ENCODE measurements at regions of chr16 and their contacts with region 1.

Region 1: GRCh38 chr16:56600398-56600999 is 7.9 kb upstream of the MT2A start:
- DNase-seq: no peak
- ATAC-seq: peak; percentile 50
- H3K4me3 Mint-ChIP-seq: no peak overlapping the region
- H3K27ac Mint-ChIP-seq: no peak overlapping the region
- H3K4me1 Mint-ChIP-seq: no peaks in the 10 kb centered on the region
- H3K27me3 Mint-ChIP-seq: peaks cover 26% of the 10 kb centered on the region
- CTCF ChIP-seq: no peak

Region 2: DNA sequence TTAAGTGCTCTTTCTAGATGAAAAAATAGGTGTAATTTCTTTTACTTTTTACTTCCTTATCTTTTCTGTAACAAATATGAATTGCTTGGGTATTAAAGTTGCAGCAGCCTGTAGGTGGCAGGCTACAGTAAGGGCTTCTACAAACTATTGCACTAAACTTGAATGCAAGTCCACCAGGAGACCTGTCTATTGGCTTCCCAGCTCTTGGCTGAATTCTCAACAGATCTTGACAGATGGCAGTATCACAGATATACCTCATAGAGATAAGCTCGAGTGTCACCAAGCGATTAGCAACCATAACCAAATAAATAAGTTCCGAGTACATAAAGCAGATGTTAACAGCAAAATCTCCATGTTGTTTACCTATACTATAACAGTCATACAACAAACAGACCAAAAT is 86.5 kb before region 1 on chr16:
- CTCF ChIA-PET with region 1: interaction called, 21 read pairs
- POLR2A ChIA-PET with region 1: no interaction called
- intact Hi-C with region 1: loop called (anchors 5 kb)
- DNase-seq: no peak
- ATAC-seq: peak; percentile 84
- H3K4me3 Mint-ChIP-seq: no peak overlapping the region
- H3K27ac Mint-ChIP-seq: peak overlapping the region; percentile 32
- H3K4me1 Mint-ChIP-seq: peaks cover 20% of the 10 kb centered on the region
- H3K27me3 Mint-ChIP-seq: no peaks in the 10 kb centered on the region
- CTCF ChIP-seq: no peak

Region 3: GRCh38 chr16:56576585-56577293 is 23.8 kb before region 1 on chr16:
- CTCF ChIA-PET with region 1: interaction called, 3 read pairs
- POLR2A ChIA-PET with region 1: no interaction called
- intact Hi-C with region 1: loop called (anchors 1 kb)
- DNase-seq: peak; percentile 67
- ATAC-seq: peak; percentile 96
- H3K4me3 Mint-ChIP-seq: no peak overlapping the region
- H3K27ac Mint-ChIP-seq: no peak overlapping the region
- H3K4me1 Mint-ChIP-seq: no peaks in the 10 kb centered on the region
- H3K27me3 Mint-ChIP-seq: peaks cover 3% of the 10 kb centered on the region
- CTCF ChIP-seq: no peak